PC-9 (cell line): ENCODE measurements at regions of chr3 and their contacts with region 1.

Region 1: DNA sequence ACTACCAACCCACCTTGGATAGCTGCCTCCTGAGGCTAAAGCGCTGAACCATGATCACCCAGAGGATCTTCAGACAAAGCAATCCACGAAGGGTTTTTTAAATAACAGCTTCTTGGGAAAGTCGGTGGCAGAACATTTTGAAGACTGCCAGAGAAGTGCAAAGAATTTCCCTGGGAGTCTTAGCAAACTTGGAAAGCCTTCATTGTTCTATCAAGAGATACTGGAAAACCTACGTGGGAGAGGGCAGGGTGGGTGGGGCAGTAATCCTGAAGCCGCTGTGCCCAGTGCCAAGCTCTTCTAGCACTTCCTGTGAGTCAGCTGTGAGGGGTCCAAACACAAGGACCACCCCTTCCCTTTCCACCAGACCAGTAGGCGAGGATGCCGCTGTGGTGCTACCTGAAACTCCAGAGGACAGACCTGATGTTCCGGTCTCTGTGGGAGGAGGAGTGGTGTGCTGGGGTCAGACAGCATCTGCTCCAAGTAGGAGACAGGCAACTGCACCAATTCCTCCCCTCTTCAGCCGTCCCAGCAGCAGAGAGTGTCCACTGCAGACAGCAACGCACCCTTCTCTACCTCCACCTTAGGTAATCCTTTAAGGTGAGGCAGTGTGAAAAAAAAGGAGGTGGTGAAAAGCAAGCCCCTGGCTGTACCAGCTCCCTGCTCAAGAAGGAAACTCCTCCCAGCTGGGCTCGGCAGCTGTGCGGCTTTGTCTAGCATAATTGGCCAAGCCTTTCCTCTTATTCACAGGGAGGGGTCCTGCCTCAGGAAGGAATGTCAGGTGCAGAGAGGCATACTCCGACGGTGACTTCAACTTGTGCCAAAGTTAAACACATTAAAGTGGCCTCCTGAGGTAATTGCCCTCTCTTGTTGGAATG is 99.0 kb downstream of the TMCC1 start:
- DNase-seq: peak; percentile 93 to 99
- H3K4me3 ChIP-seq: peak overlapping the region; percentile 96
- H3K27ac ChIP-seq: peak overlapping the region; percentile 100
- H3K4me1 ChIP-seq: peaks cover 45% of the 10 kb centered on the region
- H3K27me3 ChIP-seq: no peaks in the 10 kb centered on the region
- CTCF ChIP-seq: no peak

Region 2: GRCh38 chr3:129694256-129694655 is 100.3 kb before region 1 on chr3:
- CTCF ChIA-PET with region 1: no interaction called
- POLR2A ChIA-PET with region 1: no interaction called
- intact Hi-C with region 1: loop called (anchors 1 kb)
- DNase-seq: peak; percentile 77 to 99
- H3K4me3 ChIP-seq: no peak overlapping the region; the same call in 1 of the 2 replicates
- H3K27ac ChIP-seq: peak overlapping the region; percentile 91
- H3K4me1 ChIP-seq: peaks cover 56% of the 10 kb centered on the region
- H3K27me3 ChIP-seq: no peaks in the 10 kb centered on the region
- CTCF ChIP-seq: no peak

Region 3: DNA sequence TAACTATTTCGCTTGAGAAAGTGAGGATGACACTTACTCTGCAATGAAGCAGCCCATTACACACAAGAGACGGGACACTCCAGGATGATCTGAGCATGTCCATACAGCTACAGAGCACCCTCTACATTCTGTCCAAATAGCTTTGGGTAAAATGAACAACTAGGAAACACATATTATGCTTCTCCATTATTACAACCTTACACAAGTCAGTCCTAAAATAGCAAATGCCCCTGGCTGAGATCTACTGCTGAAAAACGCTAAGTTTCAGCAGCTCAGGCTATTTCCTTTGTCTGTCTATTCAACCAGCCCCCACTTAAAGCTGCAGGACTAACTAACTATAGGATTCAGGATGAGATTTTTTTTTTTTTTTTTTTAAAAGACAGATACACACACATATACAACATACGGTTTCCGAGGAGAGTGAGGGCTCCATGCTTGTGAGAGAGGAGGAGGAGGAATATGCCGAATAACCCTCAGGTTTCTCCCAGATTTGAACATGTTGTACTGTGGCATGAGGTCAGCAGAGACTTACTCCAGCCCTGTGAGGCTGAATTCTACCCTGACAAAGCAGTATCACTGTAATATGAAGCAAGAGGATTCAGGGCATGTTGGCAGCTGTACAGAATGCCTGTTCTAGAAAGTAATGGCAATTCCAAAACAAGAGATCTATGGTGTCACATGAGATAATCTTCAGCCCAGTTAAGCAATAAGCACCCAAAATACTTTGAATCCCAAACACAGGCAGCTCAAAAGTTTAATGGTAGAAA is 70.8 kb before region 1 on chr3:
- CTCF ChIA-PET with region 1: interaction called, 3 read pairs
- POLR2A ChIA-PET with region 1: interaction called, 14 read pairs
- intact Hi-C with region 1: no loop called
- DNase-seq: peak; percentile 35 to 39
- H3K4me3 ChIP-seq: no peak overlapping the region
- H3K27ac ChIP-seq: peak overlapping the region; percentile 32
- H3K4me1 ChIP-seq: peaks cover 30% of the 10 kb centered on the region
- H3K27me3 ChIP-seq: no peaks in the 10 kb centered on the region
- CTCF ChIP-seq: no peak

Region 4: DNA sequence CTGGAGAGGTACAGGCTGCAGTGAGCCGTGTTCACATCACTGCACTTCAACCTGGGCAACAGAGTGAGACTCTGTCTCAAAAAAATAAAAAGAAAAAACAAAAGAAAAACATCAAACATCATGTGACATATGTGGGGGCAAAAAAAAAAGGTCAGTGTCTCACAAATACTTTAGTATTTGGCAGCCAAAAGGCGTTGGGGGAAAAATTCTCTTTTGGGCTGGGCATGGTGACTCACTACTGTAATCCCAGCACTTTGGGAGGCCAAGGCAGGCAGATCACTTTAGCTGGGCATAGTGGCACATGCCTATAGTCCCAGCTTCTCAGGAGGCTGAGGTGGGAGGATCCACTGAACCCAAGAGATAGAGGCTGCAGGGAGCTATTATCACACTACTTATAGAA is 51.4 kb after region 1 on chr3:
- CTCF ChIA-PET with region 1: no interaction called
- POLR2A ChIA-PET with region 1: no interaction called
- intact Hi-C with region 1: no loop called
- DNase-seq: peak in 1 of 2 experiments; percentile 16
- H3K4me3 ChIP-seq: no peak overlapping the region
- H3K27ac ChIP-seq: no peak overlapping the region
- H3K4me1 ChIP-seq: no peaks in the 10 kb centered on the region
- H3K27me3 ChIP-seq: no peaks in the 10 kb centered on the region
- CTCF ChIP-seq: no peak